Activated CD4-positive, alpha-beta T cell treated with anti-CD3 and anti-CD28 coated beads for 36 hours (primary cell): ENCODE measurements at regions of chr22 and their contacts with region 1.

Region 1: DNA sequence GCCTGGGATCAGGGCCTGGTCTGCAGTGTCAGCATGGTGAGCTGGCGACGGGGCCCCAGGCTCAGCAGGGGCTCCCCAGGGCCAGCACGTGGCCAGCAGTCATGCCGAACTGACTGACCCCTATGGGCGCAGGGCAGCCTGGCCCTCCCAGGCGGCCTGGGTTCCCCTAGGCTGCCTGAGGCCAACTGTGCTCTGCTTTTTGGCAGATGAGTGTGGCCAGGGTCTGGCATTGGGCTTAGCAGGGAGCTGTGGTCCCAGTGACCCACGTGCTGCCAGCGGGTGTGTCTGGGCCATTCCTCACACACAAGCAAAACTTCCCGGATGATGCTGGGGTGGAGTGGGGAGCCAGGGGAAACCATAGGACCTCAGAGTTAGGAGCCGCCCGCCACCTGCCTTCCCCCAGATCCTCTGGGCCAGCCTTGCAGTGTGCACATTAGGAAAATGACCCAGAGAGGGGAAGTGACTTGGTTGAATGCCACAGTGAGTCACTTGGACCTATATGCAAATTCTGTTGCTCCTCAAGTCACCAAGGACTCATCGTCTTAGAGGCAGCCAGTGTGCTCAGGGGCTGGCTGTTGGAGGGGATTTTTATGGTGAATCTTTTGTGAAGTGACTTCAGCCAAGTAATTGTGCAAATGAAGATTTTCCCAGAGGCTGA is 6.5 kb downstream of the ADORA2A start:
- DNase-seq: no peak
- ATAC-seq: peak; percentile 81
- H3K4me3 Mint-ChIP-seq: peak overlapping the region; percentile 70
- H3K27ac Mint-ChIP-seq: peak overlapping the region; percentile 99
- H3K4me1 Mint-ChIP-seq: peaks cover 92% of the 10 kb centered on the region
- H3K27me3 Mint-ChIP-seq: no peaks in the 10 kb centered on the region

Region 2: GRCh38 chr22:24156913-24157821 is 276.8 kb before region 1 on chr22:
- CTCF ChIA-PET with region 1: no interaction called
- POLR2A ChIA-PET with region 1: no interaction called
- intact Hi-C with region 1: loop called in 1 of 2 experiments (anchors 2 kb)
- DNase-seq: peak; percentile 92
- ATAC-seq: peak; percentile 76
- H3K4me3 Mint-ChIP-seq: peak overlapping the region; percentile 79
- H3K27ac Mint-ChIP-seq: peak overlapping the region; percentile 75
- H3K4me1 Mint-ChIP-seq: peaks cover 59% of the 10 kb centered on the region
- H3K27me3 Mint-ChIP-seq: no peaks in the 10 kb centered on the region

Region 3: GRCh38 chr22:24325105-24325757 is 108.7 kb before region 1 on chr22:
- CTCF ChIA-PET with region 1: no interaction called
- POLR2A ChIA-PET with region 1: no interaction called
- intact Hi-C with region 1: loop called in 1 of 2 experiments (anchors 1 kb)
- DNase-seq: peak; percentile 23
- ATAC-seq: peak; percentile 85
- H3K4me3 Mint-ChIP-seq: no peak overlapping the region
- H3K27ac Mint-ChIP-seq: peak overlapping the region; percentile 44
- H3K4me1 Mint-ChIP-seq: peaks cover 35% of the 10 kb centered on the region
- H3K27me3 Mint-ChIP-seq: no peaks in the 10 kb centered on the region

Region 4: GRCh38 chr22:24445481-24446259 is 11.7 kb after region 1 on chr22:
- CTCF ChIA-PET with region 1: interaction called, 4 read pairs
- POLR2A ChIA-PET with region 1: no interaction called
- intact Hi-C with region 1: loop called in 1 of 2 experiments (anchors 2 kb)
- DNase-seq: peak; percentile 63
- ATAC-seq: peak; percentile 94
- H3K4me3 Mint-ChIP-seq: no peak overlapping the region
- H3K27ac Mint-ChIP-seq: peak overlapping the region; percentile 39
- H3K4me1 Mint-ChIP-seq: peaks cover 36% of the 10 kb centered on the region
- H3K27me3 Mint-ChIP-seq: no peaks in the 10 kb centered on the region

Region 5: DNA sequence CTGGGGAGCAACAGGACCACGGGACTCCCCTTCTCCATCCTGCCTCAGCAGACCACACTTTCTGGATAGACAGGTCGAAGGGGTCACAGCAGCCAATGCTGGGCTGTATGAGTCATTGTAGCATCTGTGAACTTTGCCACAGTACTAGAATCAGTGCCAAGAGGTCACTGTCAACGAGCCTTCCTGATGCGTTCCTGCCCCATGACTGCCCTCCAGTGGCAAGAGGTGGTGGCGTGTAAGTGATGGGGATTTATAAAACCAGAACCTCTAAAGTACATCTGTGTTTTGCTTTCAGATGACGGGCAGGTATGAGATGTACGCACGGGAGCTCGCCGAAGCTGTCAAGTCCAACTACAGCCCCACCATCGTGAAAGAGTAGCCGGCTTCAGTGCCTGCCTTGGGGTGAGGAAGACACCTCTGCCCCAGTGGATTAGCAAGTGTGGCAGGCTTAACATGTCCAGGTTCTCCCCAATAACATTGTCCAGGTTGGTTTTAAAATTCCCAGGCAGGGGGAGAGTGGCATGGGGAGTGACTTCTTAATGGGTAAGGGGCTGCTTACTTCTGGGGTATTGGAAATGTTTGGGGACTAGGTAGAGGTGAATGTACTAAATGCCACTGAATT is 91.6 kb after region 1 on chr22:
- CTCF ChIA-PET with region 1: interaction called, 10 read pairs
- POLR2A ChIA-PET with region 1: no interaction called
- intact Hi-C with region 1: no loop called
- DNase-seq: peak; percentile 90
- ATAC-seq: peak; percentile 92
- H3K4me3 Mint-ChIP-seq: no peak overlapping the region
- H3K27ac Mint-ChIP-seq: no peak overlapping the region
- H3K4me1 Mint-ChIP-seq: peaks cover 8% of the 10 kb centered on the region
- H3K27me3 Mint-ChIP-seq: no peaks in the 10 kb centered on the region

Region 6: GRCh38 chr22:24566899-24567511 is 133.1 kb after region 1 on chr22:
- CTCF ChIA-PET with region 1: no interaction called
- POLR2A ChIA-PET with region 1: no interaction called
- intact Hi-C with region 1: no loop called
- DNase-seq: no peak
- ATAC-seq: no peak
- H3K4me3 Mint-ChIP-seq: no peak overlapping the region
- H3K27ac Mint-ChIP-seq: peak overlapping the region; percentile 43
- H3K4me1 Mint-ChIP-seq: peaks cover 27% of the 10 kb centered on the region
- H3K27me3 Mint-ChIP-seq: no peaks in the 10 kb centered on the region